ENCODE measurements at regions of chr3 and their contacts with region 1.

Region 1: GRCh38 chr3:192816351-192816750 is 89.0 kb upstream of the FGF12 start:
- DNase-seq: peak in 1 of 2 experiments; percentile 56
- H3K4me3 ChIP-seq: no peak overlapping the region
- H3K4me3 Mint-ChIP-seq: no peak overlapping the region
- H3K27ac Mint-ChIP-seq: no peak overlapping the region
- H3K4me1 ChIP-seq: peaks cover 29% of the 10 kb centered on the region
- H3K4me1 Mint-ChIP-seq: peaks cover 46% of the 10 kb centered on the region
- H3K27me3 ChIP-seq: no peaks in the 10 kb centered on the region
- H3K27me3 Mint-ChIP-seq: no peaks in the 10 kb centered on the region
- CTCF ChIP-seq: peak; percentile 55 to 77

Region 2: GRCh38 chr3:192706272-192706671 is 110.1 kb before region 1 on chr3:
- CTCF ChIA-PET with region 1: no interaction called
- POLR2A ChIA-PET with region 1: no interaction called
- intact Hi-C with region 1: no loop called
- DNase-seq: no peak
- H3K4me3 ChIP-seq: no peak overlapping the region
- H3K4me3 Mint-ChIP-seq: no peak overlapping the region
- H3K27ac Mint-ChIP-seq: no peak overlapping the region
- H3K4me1 ChIP-seq: no peaks in the 10 kb centered on the region
- H3K4me1 Mint-ChIP-seq: no peaks in the 10 kb centered on the region
- H3K27me3 ChIP-seq: no peaks in the 10 kb centered on the region
- H3K27me3 Mint-ChIP-seq: peaks cover 8% of the 10 kb centered on the region
- CTCF ChIP-seq: no peak

Region 3: DNA sequence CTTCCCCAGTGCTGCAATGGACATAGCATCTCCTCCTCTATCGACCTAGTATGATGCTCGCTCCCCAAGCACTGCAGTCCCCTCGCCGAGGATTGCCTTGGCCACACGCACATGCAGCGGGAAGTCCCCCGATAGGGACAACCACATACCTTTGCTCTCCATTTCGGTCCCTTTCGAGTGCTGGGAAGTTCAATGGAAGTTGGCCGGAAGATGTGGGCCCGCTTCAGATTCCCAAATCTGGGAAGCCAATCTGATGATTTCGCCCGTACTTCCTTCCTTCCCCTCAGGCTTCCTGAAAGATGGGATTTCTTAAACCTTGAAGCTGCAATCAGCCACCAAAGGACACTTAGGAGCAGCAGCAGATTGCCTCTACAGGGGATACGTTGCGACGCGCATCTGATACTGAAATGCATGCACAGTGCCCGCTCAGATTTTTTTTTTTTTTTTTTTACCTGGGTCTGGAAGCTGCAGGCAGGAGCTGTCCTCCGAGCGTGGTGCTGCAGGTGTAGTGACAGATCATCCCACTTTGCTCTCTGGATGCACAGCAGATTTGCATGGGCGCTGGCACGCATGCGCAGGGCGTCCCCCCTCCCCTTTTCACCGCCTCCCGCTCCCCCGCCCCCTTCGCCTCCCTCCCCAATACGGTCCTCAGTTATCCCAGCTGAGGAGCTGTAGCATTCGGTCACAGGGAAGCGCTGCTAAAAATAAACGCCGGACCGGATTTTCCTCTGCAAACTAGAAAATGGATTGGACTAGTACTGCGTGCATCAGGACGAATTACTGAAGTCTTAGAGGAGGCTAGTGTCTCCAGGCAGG is 89.1 kb before region 1 on chr3 and contains the start of gene FGF12:
- CTCF ChIA-PET with region 1: no interaction called
- POLR2A ChIA-PET with region 1: no interaction called
- intact Hi-C with region 1: no loop called
- DNase-seq: peak; percentile 80 to 84
- H3K4me3 ChIP-seq: no peak within 1 kb of the TSS
- H3K4me3 Mint-ChIP-seq: no peak within 1 kb of the TSS
- H3K27ac Mint-ChIP-seq: no peak within 1 kb of the TSS
- H3K4me1 ChIP-seq: no peaks in the 10 kb centered on the region
- H3K4me1 Mint-ChIP-seq: no peaks in the 10 kb centered on the region
- H3K27me3 ChIP-seq: no peaks in the 10 kb centered on the region
- H3K27me3 Mint-ChIP-seq: peaks cover 19% of the 10 kb centered on the region
- CTCF ChIP-seq: no peak
- total RNA-seq, gene FGF12: 0.41 TPM in 1 of 2 replicates, not detected in the other

Region 4: DNA sequence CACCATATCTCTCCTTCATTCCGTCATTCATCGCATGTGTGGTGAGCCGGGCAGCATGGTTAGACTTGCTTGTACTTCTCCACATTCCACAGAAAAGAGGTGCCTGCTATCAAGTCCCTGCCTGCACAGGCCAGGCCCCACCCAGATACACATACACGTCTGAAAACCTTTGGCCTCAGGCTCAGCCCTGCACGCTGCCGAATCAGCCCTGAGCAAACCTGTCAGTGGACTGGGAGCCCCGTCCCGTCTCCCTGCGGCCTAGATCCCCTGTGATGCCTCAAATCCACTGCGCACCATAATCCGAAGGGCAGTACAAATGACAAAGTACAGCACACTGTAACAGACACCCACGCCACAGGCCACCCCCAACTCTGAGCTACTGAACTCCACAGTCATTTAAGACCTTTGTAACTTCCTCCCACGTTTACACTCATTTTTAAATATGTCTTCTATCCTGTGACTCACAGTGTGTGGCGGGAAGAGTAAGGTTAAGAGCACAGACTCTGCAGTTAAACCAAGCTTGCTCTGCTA is 34.2 kb after region 1 on chr3:
- CTCF ChIA-PET with region 1: interaction called, 5 read pairs
- POLR2A ChIA-PET with region 1: no interaction called
- intact Hi-C with region 1: loop called (anchors 1 kb)
- DNase-seq: peak; percentile 85 to 94
- H3K4me3 ChIP-seq: peak overlapping the region; percentile 6; the same call in 1 of the 2 replicates
- H3K4me3 Mint-ChIP-seq: peak overlapping the region; percentile 68
- H3K27ac Mint-ChIP-seq: peak overlapping the region; percentile 94
- H3K4me1 ChIP-seq: peaks cover 50% of the 10 kb centered on the region
- H3K4me1 Mint-ChIP-seq: peaks cover 40% of the 10 kb centered on the region
- H3K27me3 ChIP-seq: no peaks in the 10 kb centered on the region
- H3K27me3 Mint-ChIP-seq: no peaks in the 10 kb centered on the region
- CTCF ChIP-seq: no peak

Region 5: GRCh38 chr3:193021506-193022010 is 205.2 kb after region 1 on chr3:
- CTCF ChIA-PET with region 1: no interaction called
- POLR2A ChIA-PET with region 1: no interaction called
- intact Hi-C with region 1: loop called (anchors 1 kb)
- DNase-seq: peak; percentile 74 to 86
- H3K4me3 ChIP-seq: no peak overlapping the region
- H3K4me3 Mint-ChIP-seq: peak overlapping the region; percentile 0
- H3K27ac Mint-ChIP-seq: peak overlapping the region; percentile 25
- H3K4me1 ChIP-seq: peaks cover 22% of the 10 kb centered on the region
- H3K4me1 Mint-ChIP-seq: peaks cover 16% of the 10 kb centered on the region
- H3K27me3 ChIP-seq: no peaks in the 10 kb centered on the region
- H3K27me3 Mint-ChIP-seq: no peaks in the 10 kb centered on the region
- CTCF ChIP-seq: no peak

Region 6: GRCh38 chr3:193129601-193130000 is 313.2 kb after region 1 on chr3:
- CTCF ChIA-PET with region 1: interaction called, 8 read pairs
- POLR2A ChIA-PET with region 1: no interaction called
- intact Hi-C with region 1: loop called (anchors 1 kb)
- DNase-seq: peak in 1 of 2 experiments; percentile 20
- H3K4me3 ChIP-seq: no peak overlapping the region
- H3K4me3 Mint-ChIP-seq: no peak overlapping the region
- H3K27ac Mint-ChIP-seq: no peak overlapping the region
- H3K4me1 ChIP-seq: no peaks in the 10 kb centered on the region
- H3K4me1 Mint-ChIP-seq: no peaks in the 10 kb centered on the region
- H3K27me3 ChIP-seq: no peaks in the 10 kb centered on the region
- H3K27me3 Mint-ChIP-seq: peaks cover 29% of the 10 kb centered on the region
- CTCF ChIP-seq: peak; percentile 12 to 36

Region 7: DNA sequence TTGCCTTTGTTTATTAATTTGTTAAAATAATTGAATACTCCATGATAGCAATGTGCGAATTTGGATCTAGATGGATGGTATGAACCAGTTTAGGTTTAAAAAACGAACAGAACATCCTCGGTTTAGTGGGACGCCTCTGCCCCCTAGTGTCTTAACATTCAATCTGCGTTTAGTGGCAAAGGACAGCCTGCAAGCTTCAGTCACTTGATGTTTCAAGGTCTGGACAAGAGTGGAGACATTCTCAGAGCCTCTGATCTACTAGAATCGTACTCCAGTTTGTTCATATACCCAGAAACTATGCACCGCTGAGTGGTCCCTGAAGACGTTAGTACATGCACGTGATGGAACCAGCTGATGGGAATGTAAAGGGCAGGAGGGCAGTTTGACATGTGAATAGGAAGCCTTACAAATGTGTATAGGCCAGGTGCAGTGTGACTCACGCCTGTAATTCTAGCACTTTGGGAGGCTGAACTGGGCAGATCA is 756.1 kb after region 1 on chr3:
- CTCF ChIA-PET with region 1: no interaction called
- POLR2A ChIA-PET with region 1: no interaction called
- intact Hi-C with region 1: loop called (anchors 2 kb)
- DNase-seq: peak; percentile 68 to 78
- H3K4me3 ChIP-seq: no peak overlapping the region
- H3K4me3 Mint-ChIP-seq: no peak overlapping the region
- H3K27ac Mint-ChIP-seq: no peak overlapping the region
- H3K4me1 ChIP-seq: no peaks in the 10 kb centered on the region
- H3K4me1 Mint-ChIP-seq: no peaks in the 10 kb centered on the region
- H3K27me3 ChIP-seq: no peaks in the 10 kb centered on the region
- H3K27me3 Mint-ChIP-seq: peaks cover 5% of the 10 kb centered on the region
- CTCF ChIP-seq: peak; percentile 77 to 82

Measured in Caco-2 (cell line).